ENCODE measurements at regions of chr7 and their contacts with region 1.

Region 1: DNA sequence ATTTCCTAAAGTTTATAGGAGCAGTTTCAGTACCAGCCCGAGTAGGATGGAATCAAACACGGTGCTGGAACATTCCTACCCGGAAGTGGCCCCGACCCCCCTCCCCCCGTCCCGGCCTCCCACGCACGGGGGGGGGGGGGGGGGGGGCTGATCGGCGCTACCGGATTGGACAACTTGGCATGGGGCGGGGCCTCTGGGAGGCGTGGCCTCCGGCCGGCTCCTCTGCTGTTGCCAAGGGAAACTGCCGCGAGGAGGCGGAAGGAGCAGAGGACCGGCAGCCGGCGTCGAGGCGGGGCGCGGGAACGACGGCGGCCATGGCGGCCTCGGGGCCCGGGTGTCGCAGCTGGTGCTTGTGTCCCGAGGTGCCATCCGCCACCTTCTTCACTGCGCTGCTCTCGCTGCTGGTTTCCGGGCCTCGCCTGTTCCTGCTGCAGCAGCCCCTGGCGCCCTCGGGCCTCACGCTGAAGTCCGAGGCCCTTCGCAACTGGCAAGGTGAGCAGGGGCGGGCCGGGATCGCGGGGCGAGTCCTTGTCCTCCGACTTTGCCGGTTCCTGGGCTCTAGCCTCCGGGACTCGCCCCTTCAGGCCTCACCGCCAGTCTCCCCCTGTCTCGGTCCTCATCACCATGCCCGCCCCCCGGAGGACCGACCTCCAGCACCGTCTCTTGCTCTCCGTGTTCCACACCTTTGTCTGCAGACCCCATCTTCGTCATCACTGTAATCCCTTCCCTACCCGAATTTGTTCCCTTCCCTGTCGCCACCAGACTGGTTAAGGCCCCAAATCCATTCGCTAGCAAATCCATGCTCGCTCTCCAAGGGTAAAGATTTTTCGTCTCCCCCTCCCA is at the start of gene RHBDD2:
- DNase-seq: peak; percentile 97
- H3K4me3 ChIP-seq: peak within 1 kb of the TSS; percentile 74 to 89 (median 80)
- H3K27ac ChIP-seq: peak within 1 kb of the TSS; percentile 86 to 89 (median 87)
- H3K4me1 ChIP-seq: peaks cover 9 to 23% (median 19%) of the 10 kb centered on the region in 4 donors
- H3K27me3 ChIP-seq: no peaks in the 10 kb centered on the region
- CTCF ChIP-seq: peak in 1 of 5 experiments; percentile 13
- EP300 ChIP-seq: no peak
- POLR2A ChIP-seq: peak; percentile 95
- total RNA-seq, gene RHBDD2: 44.9 to 79.7 (median 63.7) TPM

Region 2: DNA sequence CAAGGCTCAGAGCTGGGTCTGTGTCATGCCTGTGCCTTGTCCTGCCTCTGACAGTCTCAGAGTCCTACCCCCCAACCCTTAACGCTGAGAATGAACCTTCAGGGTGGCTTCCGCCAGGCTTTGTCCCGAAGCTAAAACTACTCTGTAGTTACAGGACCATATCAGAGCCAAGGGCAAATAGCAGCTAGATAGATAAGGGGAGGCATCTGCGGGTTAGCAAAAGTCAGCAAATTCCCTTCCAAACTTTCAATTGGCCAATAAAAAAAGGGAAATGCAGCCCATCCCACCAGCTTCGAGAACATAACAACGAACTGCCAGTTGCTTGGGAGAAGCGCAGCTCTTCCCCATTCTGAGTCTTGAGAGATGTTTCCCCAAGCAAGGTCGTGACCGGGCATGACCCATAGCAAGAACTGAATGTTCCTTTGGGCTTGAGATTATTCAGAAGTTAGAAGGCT is 83.1 kb before region 1 on chr7:
- in situ Hi-C with region 1: no loop called
- intact Hi-C with region 1: no loop called
- DNase-seq: peak; percentile 41
- H3K4me3 ChIP-seq: no peak overlapping the region
- H3K27ac ChIP-seq: peak overlapping the region; percentile 0 to 61 (median 32)
- H3K4me1 ChIP-seq: peaks cover 0 to 21% (median 11%) of the 10 kb centered on the region in 4 donors
- H3K27me3 ChIP-seq: no peaks in the 10 kb centered on the region
- CTCF ChIP-seq: no peak
- EP300 ChIP-seq: peak; percentile 70
- POLR2A ChIP-seq: no peak

Region 3: GRCh38 chr7:75971961-75972763 is 93.2 kb after region 1 on chr7:
- in situ Hi-C with region 1: no loop called
- intact Hi-C with region 1: no loop called
- DNase-seq: no peak
- H3K4me3 ChIP-seq: no peak overlapping the region
- H3K27ac ChIP-seq: peak overlapping the region; percentile 30 to 55 (median 42)
- H3K4me1 ChIP-seq: peaks cover 6 to 38% (median 20%) of the 10 kb centered on the region in 4 donors
- H3K27me3 ChIP-seq: no peaks in the 10 kb centered on the region
- CTCF ChIP-seq: peak in 1 of 5 experiments; percentile 19
- EP300 ChIP-seq: no peak
- POLR2A ChIP-seq: no peak

Region 4: DNA sequence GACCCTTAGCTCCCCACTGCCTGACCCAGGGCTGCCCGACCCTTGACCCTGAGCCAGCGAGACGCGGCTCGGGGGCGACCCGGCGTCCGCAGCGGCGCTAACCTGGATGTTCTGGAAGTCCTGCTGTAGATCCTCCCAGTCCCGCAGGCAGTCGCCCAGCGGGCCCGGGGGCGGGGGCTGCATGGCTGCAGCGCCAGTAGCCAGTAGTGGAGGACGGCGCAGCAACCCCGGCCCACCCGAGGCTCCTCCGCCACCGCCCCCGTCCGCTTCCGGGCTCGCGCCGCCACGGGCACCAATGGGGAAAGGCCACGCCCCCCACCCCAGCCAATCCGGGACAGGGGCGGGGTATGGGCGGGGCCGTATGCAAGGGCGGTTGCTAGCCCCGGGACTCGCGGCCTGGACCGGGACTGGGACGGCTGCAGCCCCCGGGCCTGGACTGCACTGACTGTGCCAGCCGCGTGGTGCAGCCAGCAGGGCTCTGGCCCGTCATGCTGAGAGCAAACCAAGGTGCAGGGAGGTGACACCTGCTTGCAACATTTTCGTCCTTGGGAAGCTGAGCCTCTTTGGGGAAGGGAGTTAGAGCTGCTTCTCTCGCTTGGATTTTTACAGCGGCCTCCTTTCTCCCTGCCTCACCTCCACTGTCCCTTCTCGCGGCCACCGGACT is 115.5 kb after region 1 on chr7 and contains the start of gene TMEM120A:
- in situ Hi-C with region 1: loop called in 1 of 4 experiments (anchors 10 kb)
- intact Hi-C with region 1: no loop called
- DNase-seq: peak; percentile 98
- H3K4me3 ChIP-seq: peak within 1 kb of the TSS; percentile 62 to 90 (median 70)
- H3K27ac ChIP-seq: peak within 1 kb of the TSS; percentile 85 to 96 (median 92)
- H3K4me1 ChIP-seq: peaks cover 6 to 29% (median 17%) of the 10 kb centered on the region in 4 donors
- H3K27me3 ChIP-seq: no peaks in the 10 kb centered on the region
- CTCF ChIP-seq: peak; percentile 27 to 43 (median 33)
- EP300 ChIP-seq: no peak
- POLR2A ChIP-seq: peak; percentile 89
- total RNA-seq, gene TMEM120A: 57.6 to 119 (median 92.0) TPM

Region 5: GRCh38 chr7:76011442-76011861 is 132.5 kb after region 1 on chr7:
- in situ Hi-C with region 1: loop called in 1 of 4 experiments (anchors 10 kb)
- intact Hi-C with region 1: no loop called
- DNase-seq: no peak
- H3K4me3 ChIP-seq: no peak overlapping the region
- H3K27ac ChIP-seq: peak overlapping the region; percentile 27 to 52 (median 48)
- H3K4me1 ChIP-seq: peaks cover 0 to 9% (median 4%) of the 10 kb centered on the region in 4 donors
- H3K27me3 ChIP-seq: no peaks in the 10 kb centered on the region
- CTCF ChIP-seq: no peak
- EP300 ChIP-seq: no peak
- POLR2A ChIP-seq: no peak

Region 6: GRCh38 chr7:76191783-76192275 is 312.8 kb after region 1 on chr7:
- in situ Hi-C with region 1: no loop called
- intact Hi-C with region 1: no loop called
- DNase-seq: no peak
- H3K4me3 ChIP-seq: no peak overlapping the region
- H3K27ac ChIP-seq: no peak overlapping the region
- H3K4me1 ChIP-seq: no peaks in the 10 kb centered on the region
- H3K27me3 ChIP-seq: peaks cover 8% of the 10 kb centered on the region
- CTCF ChIP-seq: no peak
- EP300 ChIP-seq: no peak
- POLR2A ChIP-seq: no peak

Measured in transverse colon (tissue), 4 donors.